Endothelial cell of umbilical vein (primary cell): ENCODE measurements at regions of chr4 and their contacts with region 1.

Region 1: DNA sequence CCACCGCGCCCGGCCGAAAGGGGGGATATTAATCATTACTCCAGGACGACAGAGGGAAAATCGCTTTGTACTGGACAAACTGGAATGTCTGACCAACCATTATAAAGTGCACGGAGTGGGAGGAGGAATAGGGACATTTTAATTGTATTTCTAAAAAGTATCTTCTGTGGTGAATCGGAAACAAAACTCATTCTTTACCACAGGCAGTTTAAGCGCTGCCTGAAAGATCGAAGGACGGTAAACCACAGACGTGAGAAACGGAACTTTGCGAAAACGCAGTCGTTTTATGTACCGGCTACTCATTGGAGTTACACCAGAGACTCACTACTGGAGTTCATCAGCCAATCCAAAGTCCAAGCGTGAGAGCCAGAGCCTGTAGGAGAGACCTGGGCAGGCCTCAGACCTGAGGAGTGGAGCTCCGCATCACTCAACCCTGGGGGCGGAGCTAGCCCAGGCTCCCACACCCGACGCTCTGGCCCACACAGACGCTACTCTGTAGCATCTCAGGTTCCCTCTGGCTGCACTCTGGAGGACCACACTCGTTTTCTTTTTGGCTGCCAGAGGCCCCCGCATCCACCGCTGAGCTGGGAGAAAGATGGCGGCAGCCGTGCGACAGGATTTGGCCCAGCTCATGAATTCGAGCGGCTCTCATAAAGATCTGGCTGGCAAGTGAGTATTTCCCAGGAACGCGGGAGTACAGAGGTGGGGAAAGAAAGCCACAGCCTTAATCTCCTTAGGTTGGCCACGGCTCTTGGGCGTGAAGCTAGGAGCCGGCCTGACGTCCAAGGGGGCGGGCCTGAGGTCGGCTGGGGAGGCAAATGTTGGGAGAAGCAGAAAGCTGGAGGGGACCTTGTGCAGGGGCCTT is at the start of gene COPS4:
- DNase-seq: peak; percentile 100
- H3K4me3 ChIP-seq: peak within 1 kb of the TSS; percentile 78 to 94 (median 91)
- H3K27ac ChIP-seq: peak within 1 kb of the TSS; percentile 88
- H3K4me1 ChIP-seq: peaks cover 28% of the 10 kb centered on the region
- H3K27me3 ChIP-seq: peaks cover 0 to 3% of the 10 kb centered on the region in 2 experiments
- CTCF ChIP-seq: peak in 1 of 2 donors; percentile 40
- POLR2A ChIP-seq: peak; percentile 88
- total RNA-seq, gene COPS4: 47.3 and 53.0 TPM in 2 replicates

Region 2: GRCh38 chr4:82900331-82901128 is 134.3 kb before region 1 on chr4 and contains the start of gene THAP9:
- CTCF ChIA-PET with region 1: interaction called, 8 read pairs
- POLR2A ChIA-PET with region 1: interaction called, 9 read pairs
- dilution Hi-C with region 1: no loop called
- intact Hi-C with region 1: loop called (anchors 1 kb)
- DNase-seq: peak; percentile 100
- H3K4me3 ChIP-seq: peak within 1 kb of the TSS; percentile 71 to 92 (median 90)
- H3K27ac ChIP-seq: peak within 1 kb of the TSS; percentile 96
- H3K4me1 ChIP-seq: peaks cover 18% of the 10 kb centered on the region
- H3K27me3 ChIP-seq: no peaks in the 10 kb centered on the region
- CTCF ChIP-seq: no peak
- POLR2A ChIP-seq: peak; percentile 75
- total RNA-seq, gene THAP9: 1.7 and 3.2 TPM in 2 replicates

Region 3: DNA sequence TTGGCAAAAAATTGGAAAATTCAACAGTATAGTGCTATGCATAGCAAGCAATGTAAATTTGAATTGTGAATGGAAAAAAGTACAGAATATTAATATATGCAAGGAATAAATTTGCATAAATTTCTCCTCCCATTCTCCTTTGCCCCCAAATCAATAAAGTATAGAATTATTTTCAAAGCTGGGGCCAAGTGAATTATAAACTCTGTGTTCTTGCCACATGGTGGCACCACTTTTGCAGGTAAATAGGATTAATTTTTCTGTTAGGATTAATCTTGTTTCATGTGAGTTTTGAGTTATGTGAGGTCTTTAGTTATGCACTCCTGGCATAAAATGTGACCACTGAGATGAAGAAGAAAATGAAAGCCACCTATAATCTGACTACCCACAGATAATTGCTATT is 20.1 kb after region 1 on chr4:
- CTCF ChIA-PET with region 1: interaction called, 10 read pairs
- POLR2A ChIA-PET with region 1: no interaction called
- dilution Hi-C with region 1: no loop called
- intact Hi-C with region 1: no loop called
- DNase-seq: peak; percentile 40
- H3K4me3 ChIP-seq: no peak overlapping the region
- H3K27ac ChIP-seq: no peak overlapping the region
- H3K4me1 ChIP-seq: no peaks in the 10 kb centered on the region
- H3K27me3 ChIP-seq: no peaks in the 10 kb centered on the region
- CTCF ChIP-seq: peak; percentile 11 to 17
- POLR2A ChIP-seq: no peak

Region 4: DNA sequence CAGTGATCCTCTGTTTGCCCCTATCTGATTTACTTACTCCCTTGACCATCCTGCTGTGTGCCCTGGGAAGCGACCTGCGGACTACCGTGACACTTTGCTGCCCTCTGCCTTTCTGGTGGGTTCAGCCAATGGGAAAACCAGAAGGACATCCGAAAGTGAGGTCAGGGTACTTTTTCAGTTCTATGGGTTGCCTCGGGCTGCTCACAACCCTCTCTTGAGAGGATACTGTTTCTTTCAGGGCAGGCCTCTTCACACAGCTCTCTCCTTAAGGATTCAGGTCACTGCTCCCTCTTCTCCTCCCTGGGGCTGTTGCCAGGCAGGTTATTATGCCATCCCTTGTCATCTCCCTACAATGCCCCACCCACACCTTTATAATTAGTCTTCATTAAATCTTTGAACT is 58.3 kb after region 1 on chr4:
- CTCF ChIA-PET with region 1: no interaction called
- POLR2A ChIA-PET with region 1: no interaction called
- dilution Hi-C with region 1: no loop called
- intact Hi-C with region 1: no loop called
- DNase-seq: no peak
- H3K4me3 ChIP-seq: no peak overlapping the region
- H3K27ac ChIP-seq: no peak overlapping the region
- H3K4me1 ChIP-seq: peaks cover 18% of the 10 kb centered on the region
- H3K27me3 ChIP-seq: no peaks in the 10 kb centered on the region
- CTCF ChIP-seq: no peak
- POLR2A ChIP-seq: no peak